Stomach (tissue), 19 donors: ENCODE measurements at regions of chr4 and their contacts with region 1.

Region 1: DNA sequence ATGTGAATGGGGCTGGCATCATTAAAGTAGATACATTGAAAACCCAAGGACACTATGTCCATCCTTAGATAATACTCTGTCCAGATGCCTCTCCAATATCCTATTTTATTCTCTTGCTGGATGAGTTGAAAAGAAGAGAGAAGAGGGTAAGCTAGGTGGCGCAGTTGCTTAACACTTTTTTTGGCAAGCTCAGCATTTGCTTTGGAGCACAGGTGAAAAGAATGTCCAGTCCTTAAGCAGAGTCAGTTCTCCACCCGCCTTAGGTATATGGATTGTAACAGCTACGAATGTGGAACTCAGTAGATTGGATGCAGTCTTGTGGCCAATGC is 208.4 kb downstream of the NWD2 start:
- DNase-seq: peak; percentile 78 to 94
- H3K4me3 ChIP-seq: peak overlapping the region; percentile 51 to 66 (median 58)
- H3K27ac ChIP-seq: peak overlapping the region; percentile 78 to 91 (median 85)
- H3K4me1 ChIP-seq: peaks cover 5 to 32% (median 11%) of the 10 kb centered on the region in 4 donors
- H3K27me3 ChIP-seq: peaks cover 0 to 52% (median 8%) of the 10 kb centered on the region in 3 donors
- CTCF ChIP-seq: peak in 5 of 7 experiments; percentile 22 to 84 (median 58)
- EP300 ChIP-seq: no peak
- POLR2A ChIP-seq: no peak

Region 2: DNA sequence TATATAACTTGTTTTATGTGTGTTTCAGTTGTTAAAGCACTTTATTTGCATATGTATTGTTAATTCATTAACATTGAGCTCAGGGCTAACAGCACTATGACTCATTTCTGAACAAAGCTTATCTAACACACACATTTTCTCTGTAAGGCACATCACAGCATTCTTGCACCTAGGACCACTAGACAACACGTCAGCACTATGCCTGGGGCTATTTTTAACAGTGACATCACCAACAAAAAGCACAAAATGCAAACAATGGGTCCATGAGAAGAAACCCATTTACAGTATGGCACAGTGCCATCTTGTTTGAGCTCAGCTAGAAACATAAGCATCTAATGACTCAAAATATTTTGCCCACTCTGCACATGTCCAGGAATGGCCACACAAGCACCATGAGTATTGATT is 108.9 kb after region 1 on chr4:
- intact Hi-C with region 1: loop called (anchors 10 kb)
- DNase-seq: peak in 1 of 2 donors; percentile 34
- H3K4me3 ChIP-seq: no peak overlapping the region
- H3K27ac ChIP-seq: no peak overlapping the region
- H3K4me1 ChIP-seq: peaks cover 0 to 6% (median 0%) of the 10 kb centered on the region in 4 donors
- H3K27me3 ChIP-seq: no peaks in the 10 kb centered on the region
- CTCF ChIP-seq: no peak
- EP300 ChIP-seq: no peak
- POLR2A ChIP-seq: no peak